ENCODE measurements at regions of chr19 and their contacts with region 1.

Region 1: DNA sequence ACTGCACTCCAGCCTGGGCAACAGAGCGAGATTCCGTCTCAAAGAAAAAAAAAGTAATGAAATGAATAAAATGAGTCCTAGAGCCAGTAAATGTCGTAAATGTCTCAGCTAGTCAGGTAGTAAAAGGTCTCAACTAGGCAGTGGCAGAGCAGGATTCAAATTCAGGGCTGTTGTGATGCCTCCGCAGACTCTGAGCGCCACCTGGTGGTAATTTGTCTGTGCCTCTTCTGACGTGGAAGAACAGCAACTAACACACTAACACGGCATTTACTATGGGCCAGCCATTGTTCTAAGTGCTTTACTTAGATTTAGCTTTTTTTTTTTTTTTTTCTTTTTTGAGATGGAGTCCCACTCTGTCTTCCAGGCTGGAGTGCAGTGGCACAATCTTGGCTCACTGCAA is 30.2 kb downstream of the CYP2F1 start:
- DNase-seq: peak; percentile 73 to 87 (median 80)
- ATAC-seq: peak; percentile 95 to 97 (median 96)
- H3K4me3 ChIP-seq: no peak overlapping the region
- H3K27ac ChIP-seq: no peak overlapping the region
- H3K4me1 ChIP-seq: peaks cover 0 to 6% (median 0%) of the 10 kb centered on the region in 4 donors
- H3K27me3 ChIP-seq: no peaks in the 10 kb centered on the region
- CTCF ChIP-seq: peak; percentile 85 to 96 (median 90)
- POLR2A ChIP-seq: no peak

Region 2: DNA sequence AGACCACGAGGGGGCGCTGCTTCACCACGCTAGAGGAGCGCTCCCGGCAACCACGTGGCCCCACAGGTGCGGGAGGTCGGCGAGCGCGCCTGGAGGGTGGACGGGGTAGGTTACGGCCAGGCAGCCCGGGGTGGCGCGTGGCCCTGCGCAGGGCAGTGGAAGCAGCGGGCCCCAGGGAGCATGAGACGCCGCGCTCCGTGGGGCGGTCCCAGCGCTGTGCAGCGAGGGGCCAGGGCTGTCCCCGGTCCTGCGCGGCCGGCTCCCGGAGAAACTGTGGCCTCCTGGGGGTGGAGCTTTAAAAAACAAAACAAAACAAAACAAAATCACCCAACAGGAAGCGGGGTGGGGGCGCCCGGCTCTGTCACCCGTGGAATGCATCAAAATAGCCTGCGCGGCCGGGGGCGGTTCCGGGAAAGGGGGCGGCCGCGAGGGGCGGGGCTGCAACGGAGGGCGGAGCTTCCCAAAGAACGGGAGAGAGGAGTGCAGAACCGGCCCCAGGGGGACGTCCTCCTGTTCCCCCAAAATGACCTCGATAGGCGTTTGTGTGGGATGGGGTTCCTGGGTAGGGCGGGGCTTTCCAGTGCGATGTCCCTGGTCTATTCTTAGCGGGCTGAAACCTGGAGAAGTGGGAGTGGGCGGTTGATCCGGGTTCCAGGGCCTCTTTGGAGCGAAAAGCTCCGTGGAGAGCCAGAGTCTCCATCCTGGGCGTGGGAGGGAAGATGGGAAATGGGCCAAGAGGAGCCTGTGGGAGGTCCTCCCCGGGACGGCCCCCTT is 481.3 kb before region 1 on chr19:
- intact Hi-C with region 1: loop called in 1 of 2 experiments (anchors 10 kb)
- DNase-seq: peak; percentile 91 to 94 (median 91)
- ATAC-seq: peak; percentile 85 to 96 (median 91)
- H3K4me3 ChIP-seq: peak overlapping the region; percentile 60 to 81 (median 81)
- H3K27ac ChIP-seq: peak overlapping the region; percentile 35 to 64 (median 52)
- H3K4me1 ChIP-seq: peaks cover 0 to 4% (median 1%) of the 10 kb centered on the region in 4 donors
- H3K27me3 ChIP-seq: no peaks in the 10 kb centered on the region
- CTCF ChIP-seq: peak; percentile 97 to 99 (median 98)
- POLR2A ChIP-seq: peak; percentile 14

Region 3: DNA sequence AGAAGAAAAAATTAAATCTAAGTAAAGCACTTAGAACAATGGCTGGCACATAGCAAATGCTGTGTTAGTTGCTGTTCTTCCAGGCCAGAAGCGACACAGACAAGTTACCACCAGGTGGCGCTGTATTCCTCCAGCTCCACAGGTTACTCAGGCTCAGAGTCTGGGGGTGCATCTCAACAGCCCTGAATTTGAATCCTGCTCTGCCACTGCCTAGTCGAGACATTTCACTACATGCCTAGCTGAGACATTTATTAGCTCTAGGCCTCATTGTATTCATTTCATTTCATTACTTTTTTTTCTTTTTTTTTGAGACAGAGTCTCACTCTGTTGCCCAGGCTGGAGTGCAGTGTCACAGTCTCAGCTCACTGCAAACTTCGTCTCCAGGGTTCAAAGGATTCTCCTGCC is 169.8 kb before region 1 on chr19:
- intact Hi-C with region 1: loop called in 1 of 2 experiments (anchors 10 kb)
- DNase-seq: peak in 2 of 3 donors; percentile 56 to 79
- ATAC-seq: peak; percentile 78 to 92 (median 86)
- H3K4me3 ChIP-seq: no peak overlapping the region
- H3K27ac ChIP-seq: no peak overlapping the region
- H3K4me1 ChIP-seq: peaks cover 0 to 22% (median 4%) of the 10 kb centered on the region in 4 donors
- H3K27me3 ChIP-seq: no peaks in the 10 kb centered on the region
- CTCF ChIP-seq: peak; percentile 82 to 95 (median 94)
- POLR2A ChIP-seq: no peak